ENCODE measurements at regions of chrX and their contacts with region 1.

Region 1: GRCh38 chrX:136725446-136726104 is 55.2 kb downstream of the ARHGEF6 start:
- DNase-seq: no peak
- H3K4me3 Mint-ChIP-seq: no peak overlapping the region
- H3K27ac Mint-ChIP-seq: no peak overlapping the region
- H3K4me1 Mint-ChIP-seq: peaks cover 25% of the 10 kb centered on the region
- H3K27me3 Mint-ChIP-seq: no peaks in the 10 kb centered on the region

Region 2: GRCh38 chrX:136650811-136651210 is 74.8 kb before region 1 on chrX:
- CTCF ChIA-PET with region 1: no interaction called
- POLR2A ChIA-PET with region 1: interaction called, 16 read pairs
- DNase-seq: no peak
- H3K4me3 Mint-ChIP-seq: peak overlapping the region; percentile 98
- H3K27ac Mint-ChIP-seq: peak overlapping the region; percentile 84
- H3K4me1 Mint-ChIP-seq: peaks cover 48% of the 10 kb centered on the region
- H3K27me3 Mint-ChIP-seq: no peaks in the 10 kb centered on the region

Region 3: DNA sequence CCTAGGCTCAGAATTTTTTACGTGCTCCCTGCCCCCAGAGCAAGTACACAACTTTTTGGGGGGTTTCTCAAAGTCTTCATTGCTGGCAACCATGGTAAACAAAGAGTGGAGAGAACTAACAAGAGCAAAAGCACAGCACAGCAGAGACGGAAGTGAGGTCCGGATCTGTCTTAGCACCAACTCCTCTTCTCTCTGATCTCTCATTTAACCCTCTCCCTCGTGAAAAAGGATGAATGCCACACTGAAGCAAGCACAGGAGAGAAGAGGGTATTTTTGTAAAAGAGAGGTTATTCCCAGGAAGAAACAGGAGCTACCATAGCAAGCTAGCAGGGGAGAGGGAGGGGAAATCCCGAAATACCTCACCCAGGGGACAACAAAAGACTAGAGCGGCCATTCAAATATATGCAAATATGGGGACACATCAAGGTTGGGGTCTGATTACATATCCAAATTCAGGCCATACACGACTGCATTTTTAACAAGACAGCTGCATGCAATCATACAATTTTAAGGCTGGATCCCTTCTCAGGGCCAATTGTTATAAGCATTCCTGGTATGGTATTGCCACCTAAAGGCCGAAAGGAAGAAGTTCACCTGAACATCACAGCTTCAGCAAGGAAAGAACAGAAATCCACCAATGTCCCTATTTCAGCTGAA is 31.0 kb before region 1 on chrX:
- CTCF ChIA-PET with region 1: no interaction called
- POLR2A ChIA-PET with region 1: no interaction called
- DNase-seq: peak; percentile 41
- H3K4me3 Mint-ChIP-seq: peak overlapping the region; percentile 68
- H3K27ac Mint-ChIP-seq: peak overlapping the region; percentile 96
- H3K4me1 Mint-ChIP-seq: peaks cover 76% of the 10 kb centered on the region
- H3K27me3 Mint-ChIP-seq: no peaks in the 10 kb centered on the region

Region 4: DNA sequence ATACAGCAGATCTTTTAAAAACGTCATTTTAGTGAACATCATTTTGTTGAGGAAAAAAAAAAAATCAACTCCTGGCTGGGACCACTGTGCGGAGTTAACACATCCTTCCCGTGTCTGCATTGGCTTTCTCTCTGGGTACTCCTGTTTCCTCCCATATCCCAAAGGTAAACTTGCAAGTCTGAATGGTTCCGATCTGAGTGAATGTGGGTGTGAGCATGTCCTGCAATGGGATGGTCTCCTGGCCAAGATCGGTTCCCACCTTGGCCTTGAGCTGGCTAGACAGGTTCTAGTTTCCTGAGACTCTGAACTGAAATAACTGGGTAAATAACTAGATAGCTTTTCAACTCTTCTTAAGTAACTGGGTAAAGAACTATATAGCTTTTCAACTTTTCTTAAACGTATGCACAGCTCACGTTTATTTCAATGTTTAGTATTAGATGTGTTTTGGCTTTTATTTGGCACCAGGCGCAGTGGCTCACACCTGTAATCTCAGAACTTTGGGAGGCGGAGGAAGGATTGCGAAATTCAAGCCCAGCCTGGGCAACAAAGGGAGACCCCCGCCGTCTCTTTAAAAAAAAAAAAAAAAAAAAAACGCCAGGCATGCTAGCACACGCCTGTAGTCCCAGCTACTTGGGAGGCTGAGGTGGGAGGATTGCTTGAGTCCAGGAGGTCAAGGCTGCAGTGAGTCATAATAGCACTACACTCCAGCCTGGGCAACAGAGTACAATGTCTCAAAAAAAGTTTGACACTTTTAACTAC is 140.9 kb after region 1 on chrX:
- CTCF ChIA-PET with region 1: no interaction called
- POLR2A ChIA-PET with region 1: no interaction called
- DNase-seq: no peak
- H3K4me3 Mint-ChIP-seq: no peak overlapping the region
- H3K27ac Mint-ChIP-seq: peak overlapping the region; percentile 66
- H3K4me1 Mint-ChIP-seq: peaks cover 27% of the 10 kb centered on the region
- H3K27me3 Mint-ChIP-seq: no peaks in the 10 kb centered on the region